Activated CD8-positive, alpha-beta memory T cell treated with anti-CD3 and anti-CD28 coated beads, Interleukin-2, amount 10 ng/mL, durations not matched to agents 7 days and 5 days (primary cell): ENCODE measurements at regions of chr20 and their contacts with region 1.

Region 1: GRCh38 chr20:49982346-49983122 is at the start of gene SNAI1:
- DNase-seq: peak; percentile 85
- ATAC-seq: peak; percentile 91
- H3K4me3 Mint-ChIP-seq: peak within 1 kb of the TSS; percentile 41
- H3K27ac Mint-ChIP-seq: no peak within 1 kb of the TSS
- H3K4me1 Mint-ChIP-seq: peaks cover 18% of the 10 kb centered on the region
- H3K27me3 Mint-ChIP-seq: peaks cover 26% of the 10 kb centered on the region
- total RNA-seq, gene SNAI1: 0.21 to 0.61 TPM

Region 2: DNA sequence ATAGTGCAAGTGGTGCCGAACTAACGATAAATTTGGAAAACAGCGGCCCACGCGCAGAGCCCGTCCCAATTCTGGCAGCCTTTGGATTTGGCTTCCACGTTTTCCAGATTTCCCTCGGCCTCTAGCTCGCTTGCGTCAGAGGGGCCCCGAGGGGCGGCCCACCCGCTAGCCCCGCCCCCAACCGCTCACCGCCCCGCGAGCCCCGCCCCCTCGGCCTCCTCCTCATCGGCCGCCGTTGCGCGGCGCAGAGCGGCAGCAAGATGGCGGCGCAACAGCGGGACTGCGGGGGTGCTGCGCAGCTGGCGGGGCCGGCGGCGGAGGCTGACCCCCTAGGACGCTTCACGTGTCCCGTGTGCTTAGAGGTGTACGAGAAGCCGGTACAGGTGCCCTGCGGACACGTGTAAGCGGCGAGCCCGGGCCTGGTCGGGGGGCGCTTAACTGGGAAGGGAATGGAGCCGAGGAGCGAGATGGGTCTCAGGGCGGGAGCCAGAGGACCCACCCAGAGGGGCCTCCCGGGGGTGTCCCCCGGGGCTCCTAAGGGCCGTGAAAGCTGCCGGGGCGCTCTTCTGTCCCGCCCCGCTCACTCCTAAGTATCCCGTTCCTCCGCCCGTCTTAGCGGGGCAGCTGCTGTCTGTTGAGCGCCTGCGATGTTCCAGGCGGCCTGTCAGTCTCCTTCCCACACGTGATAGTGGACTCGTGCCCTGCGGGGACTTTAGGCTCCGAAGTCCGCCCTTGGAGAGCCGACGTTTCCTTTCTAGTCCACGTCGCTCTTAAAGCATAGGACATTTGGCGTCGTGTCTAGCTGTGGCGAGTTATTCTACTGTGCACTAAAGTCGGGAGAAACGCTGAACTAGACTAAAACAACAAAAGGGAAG is 46.1 kb before region 1 on chr20 and contains the start of gene RNF114:
- CTCF ChIA-PET with region 1: interaction called, 21 read pairs
- DNase-seq: peak; percentile 92
- ATAC-seq: peak; percentile 89
- H3K4me3 Mint-ChIP-seq: peak within 1 kb of the TSS; percentile 94
- H3K27ac Mint-ChIP-seq: peak within 1 kb of the TSS; percentile 93
- H3K4me1 Mint-ChIP-seq: peaks cover 49% of the 10 kb centered on the region
- H3K27me3 Mint-ChIP-seq: no peaks in the 10 kb centered on the region
- total RNA-seq, gene RNF114: 65.2 to 74.4 TPM

Region 3: DNA sequence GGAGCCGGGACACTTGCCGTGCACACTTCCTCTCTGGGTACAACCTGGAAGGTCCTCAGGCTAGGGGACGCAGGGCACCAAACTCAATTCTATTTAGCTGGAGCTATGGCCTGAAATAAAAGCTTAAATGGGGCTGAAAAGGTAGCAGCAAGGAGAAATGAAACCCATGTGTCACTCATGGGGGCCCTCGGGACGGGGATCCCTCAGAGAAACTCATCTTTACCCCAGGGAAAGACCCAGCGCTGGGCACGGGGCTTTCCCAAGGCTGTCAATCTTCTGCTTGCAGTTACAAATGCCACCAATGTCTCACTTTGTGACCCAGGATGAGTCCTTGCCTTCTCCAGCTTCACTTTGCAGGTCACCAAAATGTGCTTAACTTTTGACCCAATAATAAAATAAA is 16.8 kb after region 1 on chr20:
- CTCF ChIA-PET with region 1: interaction called, 10 read pairs
- DNase-seq: no peak
- ATAC-seq: no peak
- H3K4me3 Mint-ChIP-seq: no peak overlapping the region
- H3K27ac Mint-ChIP-seq: no peak overlapping the region
- H3K4me1 Mint-ChIP-seq: peaks cover 22% of the 10 kb centered on the region
- H3K27me3 Mint-ChIP-seq: peaks cover 11% of the 10 kb centered on the region

Region 4: DNA sequence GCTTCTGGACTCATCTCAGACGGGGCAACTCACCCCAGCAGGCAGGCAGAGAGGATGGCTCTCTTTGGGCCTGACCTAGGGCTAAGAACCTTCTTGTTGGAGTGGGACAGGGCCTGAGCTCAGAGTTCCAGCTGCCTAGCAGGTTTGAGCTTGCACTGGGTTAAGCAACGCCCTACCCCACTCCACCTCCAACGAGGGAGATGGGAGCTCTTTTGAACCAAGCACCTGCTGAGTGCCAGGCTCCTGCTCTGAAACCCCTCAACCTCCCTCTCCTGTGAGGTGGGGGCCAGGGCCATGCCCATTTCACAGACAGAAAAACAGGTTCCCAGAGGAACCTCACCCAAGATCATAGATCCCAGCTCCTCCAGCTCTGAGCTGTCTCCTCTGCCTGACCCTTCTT is 54.6 kb after region 1 on chr20:
- CTCF ChIA-PET with region 1: interaction called, 13 read pairs
- DNase-seq: no peak
- ATAC-seq: no peak
- H3K4me3 Mint-ChIP-seq: no peak overlapping the region
- H3K27ac Mint-ChIP-seq: no peak overlapping the region
- H3K4me1 Mint-ChIP-seq: no peaks in the 10 kb centered on the region
- H3K27me3 Mint-ChIP-seq: peaks cover 4% of the 10 kb centered on the region

Region 5: DNA sequence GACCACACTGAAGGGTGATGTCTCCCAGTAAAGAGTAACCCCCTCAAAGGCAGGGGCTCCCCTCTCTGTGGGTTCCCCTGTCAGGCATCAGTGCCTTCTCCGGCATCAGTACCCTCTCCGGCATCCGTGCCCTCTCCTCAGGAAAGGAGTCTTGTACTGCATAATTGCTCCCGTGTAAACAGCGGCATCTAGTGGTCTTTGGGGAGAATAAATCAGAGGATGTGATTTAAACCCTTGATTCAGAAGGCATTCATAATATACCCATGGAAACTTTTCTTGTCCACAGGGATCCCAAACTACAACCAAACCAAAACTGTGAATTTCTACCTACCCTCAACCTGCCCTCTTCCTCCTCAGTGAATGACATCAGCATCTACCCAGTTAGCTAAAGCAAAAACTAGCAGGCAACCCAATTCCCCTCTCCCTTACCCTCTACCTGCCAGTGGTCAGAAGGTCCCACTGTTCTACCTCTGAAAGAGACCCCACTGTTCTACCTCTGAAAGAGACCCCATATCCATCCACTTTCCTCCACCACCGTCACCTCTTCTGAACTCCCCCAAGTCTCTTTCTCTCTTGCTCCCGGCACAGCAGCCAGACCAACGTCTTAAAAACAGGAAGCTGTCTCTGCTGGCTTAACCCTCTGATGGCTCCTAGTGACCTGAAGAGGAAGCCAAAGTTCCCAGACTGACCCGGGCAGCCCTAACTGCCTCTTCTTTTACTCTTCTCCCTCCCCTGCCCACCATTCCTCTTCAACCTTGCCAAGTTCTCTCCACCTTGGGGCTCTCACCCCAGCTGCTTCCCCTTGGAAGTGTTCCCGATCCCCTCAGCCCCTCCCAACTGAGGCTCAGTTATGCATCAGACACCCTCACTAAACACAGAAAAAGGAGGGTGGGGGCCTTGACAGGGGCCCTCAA is 103.2 kb after region 1 on chr20:
- CTCF ChIA-PET with region 1: interaction called, 37 read pairs
- DNase-seq: peak; percentile 54
- ATAC-seq: peak; percentile 79
- H3K4me3 Mint-ChIP-seq: peak overlapping the region; percentile 11
- H3K27ac Mint-ChIP-seq: peak overlapping the region; percentile 81
- H3K4me1 Mint-ChIP-seq: peaks cover 26% of the 10 kb centered on the region
- H3K27me3 Mint-ChIP-seq: no peaks in the 10 kb centered on the region

Region 6: GRCh38 chr20:50153485-50154377 is 171.2 kb after region 1 on chr20 and contains the start of gene PEDS1:
- CTCF ChIA-PET with region 1: interaction called, 16 read pairs
- DNase-seq: peak; percentile 90
- ATAC-seq: peak; percentile 98
- H3K4me3 Mint-ChIP-seq: peak within 1 kb of the TSS; percentile 89
- H3K27ac Mint-ChIP-seq: peak within 1 kb of the TSS; percentile 88
- H3K4me1 Mint-ChIP-seq: peaks cover 37% of the 10 kb centered on the region
- H3K27me3 Mint-ChIP-seq: no peaks in the 10 kb centered on the region
- total RNA-seq, gene PEDS1: 24.2 to 25.4 TPM

Region 7: DNA sequence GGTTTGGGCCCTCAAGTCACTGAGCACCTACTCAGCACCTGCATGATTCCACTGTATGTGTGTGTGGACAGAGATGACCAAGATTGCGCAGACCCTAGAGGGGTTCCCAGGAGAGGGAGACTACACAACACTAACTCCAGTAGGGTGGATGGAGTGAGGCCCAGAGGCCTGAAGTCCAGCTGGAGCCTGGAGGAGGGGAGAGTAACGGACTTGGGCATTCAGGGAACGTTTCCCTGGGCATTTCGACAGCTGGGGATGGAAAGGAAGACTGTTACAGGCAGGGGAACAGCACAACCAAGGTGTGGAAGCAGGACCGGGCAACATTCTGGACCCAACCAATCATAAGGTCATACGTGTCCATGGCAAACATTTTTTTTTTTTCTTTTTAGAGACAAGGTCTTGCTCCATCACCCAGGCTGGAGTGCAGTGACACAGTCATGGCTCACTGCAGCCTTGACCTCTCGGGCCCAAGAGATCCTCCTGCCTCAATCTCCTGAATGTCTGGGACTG is 197.0 kb after region 1 on chr20:
- CTCF ChIA-PET with region 1: interaction called, 100 read pairs
- DNase-seq: no peak
- ATAC-seq: no peak
- H3K4me3 Mint-ChIP-seq: no peak overlapping the region
- H3K27ac Mint-ChIP-seq: no peak overlapping the region
- H3K4me1 Mint-ChIP-seq: no peaks in the 10 kb centered on the region
- H3K27me3 Mint-ChIP-seq: peaks cover 12% of the 10 kb centered on the region